Upper lobe of right lung (tissue), 1 donor: ENCODE measurements at regions of chr12 and their contacts with region 1.

Region 1: GRCh38 chr12:49069507-49070346 is at the start of gene RHEBL1:
- DNase-seq: peak; percentile 99
- ATAC-seq: peak; percentile 100
- H3K4me3 ChIP-seq: peak within 1 kb of the TSS; percentile 91
- H3K27ac ChIP-seq: peak within 1 kb of the TSS; percentile 78
- H3K4me1 ChIP-seq: peaks cover 4% of the 10 kb centered on the region
- H3K27me3 ChIP-seq: no peaks in the 10 kb centered on the region
- CTCF ChIP-seq: peak; percentile 14
- total RNA-seq, gene RHEBL1: 1.1 TPM

Region 2: GRCh38 chr12:48758221-48758620 is 311.5 kb before region 1 on chr12:
- intact Hi-C with region 1: no loop called
- DNase-seq: no peak
- ATAC-seq: no peak
- H3K4me3 ChIP-seq: no peak overlapping the region
- H3K27ac ChIP-seq: no peak overlapping the region
- H3K4me1 ChIP-seq: no peaks in the 10 kb centered on the region
- H3K27me3 ChIP-seq: no peaks in the 10 kb centered on the region
- CTCF ChIP-seq: no peak

Region 3: DNA sequence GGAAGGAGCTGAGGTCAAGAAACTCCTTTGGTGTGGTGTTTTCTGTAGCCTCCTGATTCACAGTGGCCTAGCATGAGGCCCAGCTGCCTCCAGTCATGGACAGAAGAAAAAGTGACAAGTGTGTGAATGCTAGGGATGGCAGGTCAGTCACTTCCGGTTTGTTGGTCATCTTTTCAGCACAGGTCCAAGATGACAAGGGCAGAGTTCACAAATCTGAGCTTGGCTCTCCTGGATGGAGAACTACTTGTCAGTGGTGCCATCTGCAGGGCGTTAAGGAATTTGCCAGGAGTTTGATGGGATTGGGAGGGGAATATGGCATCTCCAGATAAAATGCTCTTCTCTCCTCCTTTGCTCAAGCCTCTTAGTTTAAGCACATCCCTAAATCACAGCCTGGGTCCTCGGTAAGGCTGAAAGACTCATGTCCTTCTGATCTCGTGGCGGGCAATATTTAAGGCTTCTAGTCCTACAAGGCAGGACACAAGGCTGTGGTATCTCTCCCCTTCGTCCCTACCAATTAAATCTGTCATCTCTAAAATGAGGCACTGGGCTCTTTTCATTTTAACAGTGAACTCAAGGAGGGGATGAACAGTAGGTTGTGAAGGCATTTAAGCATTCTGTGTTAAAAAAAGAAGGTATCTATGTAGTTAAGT is 51.4 kb after region 1 on chr12:
- intact Hi-C with region 1: loop called (anchors 10 kb)
- DNase-seq: no peak
- ATAC-seq: peak; percentile 96
- H3K4me3 ChIP-seq: no peak overlapping the region
- H3K27ac ChIP-seq: no peak overlapping the region
- H3K4me1 ChIP-seq: no peaks in the 10 kb centered on the region
- H3K27me3 ChIP-seq: no peaks in the 10 kb centered on the region
- CTCF ChIP-seq: peak; percentile 60

Region 4: GRCh38 chr12:49146406-49146805 is 76.7 kb after region 1 on chr12:
- intact Hi-C with region 1: no loop called
- DNase-seq: no peak
- ATAC-seq: no peak
- H3K4me3 ChIP-seq: no peak overlapping the region
- H3K27ac ChIP-seq: no peak overlapping the region
- H3K4me1 ChIP-seq: no peaks in the 10 kb centered on the region
- H3K27me3 ChIP-seq: no peaks in the 10 kb centered on the region
- CTCF ChIP-seq: no peak

Region 5: GRCh38 chr12:49260166-49260565 is 190.4 kb after region 1 on chr12:
- intact Hi-C with region 1: no loop called
- DNase-seq: no peak
- ATAC-seq: no peak
- H3K4me3 ChIP-seq: no peak overlapping the region
- H3K27ac ChIP-seq: no peak overlapping the region
- H3K4me1 ChIP-seq: peaks cover 10% of the 10 kb centered on the region
- H3K27me3 ChIP-seq: no peaks in the 10 kb centered on the region
- CTCF ChIP-seq: no peak